ENCODE measurements at regions of chr7 and their contacts with region 1.

Region 1: DNA sequence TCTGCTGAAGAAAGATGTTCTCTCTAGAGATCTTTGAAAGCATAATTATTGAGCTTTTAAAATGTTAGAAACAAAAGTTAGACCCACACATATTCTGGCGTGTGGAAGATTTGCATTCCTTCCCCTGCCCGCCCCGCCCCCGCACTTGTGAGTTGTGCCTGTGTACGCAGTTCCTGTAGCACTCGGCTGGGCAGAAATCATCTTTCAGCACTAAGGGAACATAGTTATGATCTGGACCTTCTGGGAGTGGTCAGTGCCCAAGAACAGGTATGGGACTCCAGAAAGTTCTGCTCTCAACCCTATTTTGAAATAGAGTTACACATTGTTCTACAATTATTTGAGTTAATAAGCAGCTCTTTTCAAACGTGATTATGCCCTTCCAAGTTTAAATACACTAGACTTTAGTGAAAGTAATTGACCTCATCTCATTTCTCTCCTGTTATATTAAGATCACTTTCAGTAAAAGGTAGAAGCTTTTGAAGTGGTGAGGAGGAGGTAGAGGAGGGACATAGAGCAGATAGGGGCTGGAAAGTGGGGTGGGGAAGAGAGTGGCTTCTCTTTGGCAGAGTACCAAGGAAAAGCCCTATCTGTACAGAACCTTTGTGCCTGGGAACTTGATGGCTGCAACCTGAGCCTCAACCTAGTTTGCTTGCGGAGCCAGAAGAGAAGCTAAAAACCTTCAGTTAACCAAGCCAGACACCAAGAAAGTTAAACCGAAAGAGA is 5.7 kb downstream of the BLVRA start:
- DNase-seq: peak in 1 of 2 experiments; percentile 31
- H3K4me3 ChIP-seq: peak overlapping the region; percentile 7; the same call in 1 of the 2 replicates
- H3K27ac ChIP-seq: peak overlapping the region; percentile 71
- H3K4me1 ChIP-seq: peaks cover 73% of the 10 kb centered on the region
- H3K27me3 ChIP-seq: no peaks in the 10 kb centered on the region
- CTCF ChIP-seq: no peak

Region 2: DNA sequence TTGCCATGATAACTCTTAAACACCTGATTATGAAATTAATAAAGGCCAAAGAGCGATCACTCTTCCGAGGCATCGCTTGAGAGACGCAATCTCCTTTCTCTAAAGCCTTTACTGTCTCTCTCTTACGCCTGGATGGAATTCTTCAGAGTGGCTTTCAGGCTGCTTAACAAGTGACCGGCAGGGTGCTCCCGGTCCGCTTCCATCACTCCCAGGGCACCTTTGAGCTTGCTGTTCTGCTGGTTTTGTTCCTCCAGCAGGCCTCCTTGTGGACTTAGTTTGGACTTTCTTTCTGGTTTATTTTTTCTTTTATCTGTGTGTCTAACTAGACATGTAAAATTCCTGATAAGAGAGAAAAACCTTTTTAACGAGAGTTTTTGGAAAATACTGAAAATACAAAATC is 771.2 kb before region 1 on chr7:
- CTCF ChIA-PET with region 1: no interaction called
- POLR2A ChIA-PET with region 1: no interaction called
- intact Hi-C with region 1: no loop called
- DNase-seq: peak in 1 of 2 experiments; percentile 3
- H3K4me3 ChIP-seq: no peak overlapping the region
- H3K27ac ChIP-seq: no peak overlapping the region
- H3K4me1 ChIP-seq: no peaks in the 10 kb centered on the region
- H3K27me3 ChIP-seq: peaks cover 65% of the 10 kb centered on the region
- CTCF ChIP-seq: no peak

Region 3: GRCh38 chr7:43779032-43779812 is 15.0 kb after region 1 on chr7:
- CTCF ChIA-PET with region 1: no interaction called
- POLR2A ChIA-PET with region 1: no interaction called
- intact Hi-C with region 1: loop called (anchors 2 kb)
- DNase-seq: no peak
- H3K4me3 ChIP-seq: peak overlapping the region; percentile 43; the same call in 1 of the 2 replicates
- H3K27ac ChIP-seq: 0 out of 2 replicates have a peak overlapping the region, but pooled peaks have one; percentile 25
- H3K4me1 ChIP-seq: peaks cover 34% of the 10 kb centered on the region
- H3K27me3 ChIP-seq: no peaks in the 10 kb centered on the region
- CTCF ChIP-seq: no peak

Region 4: GRCh38 chr7:43942997-43943704 is 179.0 kb after region 1 on chr7:
- CTCF ChIA-PET with region 1: no interaction called
- POLR2A ChIA-PET with region 1: no interaction called
- intact Hi-C with region 1: no loop called
- DNase-seq: peak; percentile 55 to 86
- H3K4me3 ChIP-seq: no peak overlapping the region
- H3K27ac ChIP-seq: no peak overlapping the region
- H3K4me1 ChIP-seq: peaks cover 23% of the 10 kb centered on the region
- H3K27me3 ChIP-seq: no peaks in the 10 kb centered on the region
- CTCF ChIP-seq: peak; percentile 68

Region 5: DNA sequence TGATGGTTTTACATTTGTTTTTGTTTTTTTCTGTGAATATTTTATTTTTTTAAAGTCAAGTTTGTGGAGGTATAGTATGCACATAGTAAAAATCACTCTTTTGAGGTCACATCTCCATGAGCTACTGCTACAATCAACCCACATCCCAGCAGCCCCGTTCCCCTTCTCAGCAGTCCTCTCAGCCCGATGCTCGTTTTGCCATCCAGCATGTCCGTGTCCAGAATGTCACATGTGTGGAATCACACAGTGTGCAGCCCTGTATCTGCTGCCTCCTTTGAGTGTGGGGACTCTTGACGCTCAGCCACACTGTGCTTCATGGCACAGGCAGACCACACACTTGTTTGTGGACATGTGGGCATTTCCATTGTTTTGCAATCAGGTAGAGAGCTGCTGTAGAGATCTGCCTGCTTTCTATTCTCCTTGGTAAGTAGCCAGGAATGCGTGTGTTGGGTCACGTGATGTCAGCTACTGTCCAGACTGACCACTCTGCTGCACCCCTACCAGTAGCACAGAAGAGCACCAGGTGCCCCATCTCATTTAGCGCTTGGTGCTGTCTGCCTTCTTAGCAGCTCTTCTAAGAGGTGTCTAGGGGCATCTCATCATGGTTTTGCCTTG is 632.8 kb after region 1 on chr7:
- CTCF ChIA-PET with region 1: no interaction called
- POLR2A ChIA-PET with region 1: no interaction called
- intact Hi-C with region 1: no loop called
- DNase-seq: no peak
- H3K4me3 ChIP-seq: no peak overlapping the region
- H3K27ac ChIP-seq: no peak overlapping the region
- H3K4me1 ChIP-seq: no peaks in the 10 kb centered on the region
- H3K27me3 ChIP-seq: no peaks in the 10 kb centered on the region
- CTCF ChIP-seq: no peak